ENCODE measurements at regions of chr2 and their contacts with region 1.

Region 1: GRCh38 chr2:170680172-170680941 is 34.8 kb upstream of the SP5 start:
- DNase-seq: no peak
- ATAC-seq: no peak
- H3K4me3 ChIP-seq: no peak overlapping the region
- H3K27ac ChIP-seq: no peak overlapping the region
- H3K4me1 ChIP-seq: no peaks in the 10 kb centered on the region
- H3K27me3 ChIP-seq: no peaks in the 10 kb centered on the region
- CTCF ChIP-seq: no peak
- POLR2A ChIP-seq: no peak
- RAD21 ChIP-seq: no peak

Region 2: GRCh38 chr2:170665743-170666142 is 14.6 kb before region 1 on chr2:
- CTCF ChIA-PET with region 1: no interaction called
- POLR2A ChIA-PET with region 1: no interaction called
- RAD21 ChIA-PET with region 1: no interaction called
- intact Hi-C with region 1: no loop called
- DNase-seq: no peak
- ATAC-seq: no peak
- H3K4me3 ChIP-seq: no peak overlapping the region
- H3K27ac ChIP-seq: no peak overlapping the region
- H3K4me1 ChIP-seq: no peaks in the 10 kb centered on the region
- H3K27me3 ChIP-seq: no peaks in the 10 kb centered on the region
- CTCF ChIP-seq: no peak
- POLR2A ChIP-seq: no peak
- RAD21 ChIP-seq: no peak

Region 3: DNA sequence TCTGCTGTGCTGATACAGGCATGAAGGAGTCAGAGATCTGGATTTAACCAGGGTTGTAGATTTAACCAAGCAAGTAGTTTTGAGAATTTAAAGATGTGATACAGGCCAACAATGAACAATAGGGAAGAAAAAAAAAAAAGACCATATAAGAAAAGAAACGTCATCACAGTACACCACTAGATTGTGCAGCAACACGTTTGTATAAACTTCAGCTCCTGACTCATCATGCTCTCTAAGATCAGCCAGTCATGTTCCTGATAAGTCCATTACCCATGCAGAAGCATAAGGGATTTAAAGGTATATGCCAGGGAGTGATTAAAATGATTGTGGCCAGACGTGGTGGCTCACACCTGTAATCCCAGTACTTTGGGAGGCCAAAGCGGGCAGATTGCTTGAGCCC is 67.6 kb after region 1 on chr2:
- CTCF ChIA-PET with region 1: no interaction called
- POLR2A ChIA-PET with region 1: no interaction called
- RAD21 ChIA-PET with region 1: no interaction called
- intact Hi-C with region 1: loop called (anchors 10 kb)
- DNase-seq: no peak
- ATAC-seq: no peak
- H3K4me3 ChIP-seq: no peak overlapping the region
- H3K27ac ChIP-seq: no peak overlapping the region
- H3K4me1 ChIP-seq: no peaks in the 10 kb centered on the region
- H3K27me3 ChIP-seq: no peaks in the 10 kb centered on the region
- CTCF ChIP-seq: no peak
- POLR2A ChIP-seq: no peak
- RAD21 ChIP-seq: no peak

Measured in HCT116 (cell line).